ENCODE measurements at regions of chr9 and their contacts with region 1.

Region 1: GRCh38 chr9:87973730-87974292 is 522 bp downstream of the CDK20 start:
- DNase-seq: peak; percentile 19
- ATAC-seq: no peak
- H3K4me3 Mint-ChIP-seq: peak overlapping the region; percentile 82
- H3K27ac Mint-ChIP-seq: peak overlapping the region; percentile 58
- H3K4me1 Mint-ChIP-seq: peaks cover 22% of the 10 kb centered on the region
- H3K27me3 Mint-ChIP-seq: no peaks in the 10 kb centered on the region

Region 2: GRCh38 chr9:88076286-88077090 is 102.7 kb after region 1 on chr9:
- CTCF ChIA-PET with region 1: no interaction called
- POLR2A ChIA-PET with region 1: no interaction called
- intact Hi-C with region 1: loop called in 1 of 2 experiments (anchors 1 kb)
- DNase-seq: peak; percentile 68
- ATAC-seq: peak; percentile 72
- H3K4me3 Mint-ChIP-seq: peak overlapping the region; percentile 66
- H3K27ac Mint-ChIP-seq: no peak overlapping the region
- H3K4me1 Mint-ChIP-seq: peaks cover 6% of the 10 kb centered on the region
- H3K27me3 Mint-ChIP-seq: peaks cover 49% of the 10 kb centered on the region

Region 3: DNA sequence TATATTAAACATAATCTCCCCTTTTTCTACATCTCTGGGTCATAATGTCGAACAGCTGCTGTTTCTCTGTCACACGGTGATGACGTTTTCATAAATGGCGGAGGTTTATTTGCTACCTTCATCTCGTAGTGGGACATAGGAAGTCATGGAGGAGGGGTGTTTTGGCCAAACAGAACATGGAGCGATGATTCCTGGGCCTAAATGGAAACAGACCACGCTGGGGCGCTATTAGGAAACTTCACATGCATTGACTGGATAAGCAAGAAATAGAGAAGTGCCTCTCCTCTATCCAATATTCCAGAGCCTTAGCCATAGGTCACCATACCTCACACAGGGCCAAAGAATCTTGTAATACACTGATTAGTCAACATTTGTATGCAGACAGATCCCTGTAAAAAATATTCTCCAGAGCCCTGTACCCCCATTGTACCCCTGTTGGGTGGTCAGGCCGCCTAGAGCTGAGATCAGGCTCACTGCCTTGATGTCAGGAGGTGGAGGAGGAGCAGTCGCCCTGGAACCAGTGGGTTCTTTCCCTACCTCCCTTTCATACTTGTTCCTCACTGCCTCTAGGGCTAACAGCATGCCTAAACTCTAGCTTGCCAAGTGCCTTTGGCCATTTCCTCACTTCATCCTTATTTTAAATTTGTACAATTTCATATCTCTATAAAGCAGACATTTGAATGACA is 336.6 kb after region 1 on chr9:
- CTCF ChIA-PET with region 1: no interaction called
- POLR2A ChIA-PET with region 1: no interaction called
- intact Hi-C with region 1: loop called in 1 of 2 experiments (anchors 5 kb)
- DNase-seq: no peak
- ATAC-seq: no peak
- H3K4me3 Mint-ChIP-seq: no peak overlapping the region
- H3K27ac Mint-ChIP-seq: peak overlapping the region; percentile 25
- H3K4me1 Mint-ChIP-seq: peaks cover 31% of the 10 kb centered on the region
- H3K27me3 Mint-ChIP-seq: peaks cover 6% of the 10 kb centered on the region

Region 4: DNA sequence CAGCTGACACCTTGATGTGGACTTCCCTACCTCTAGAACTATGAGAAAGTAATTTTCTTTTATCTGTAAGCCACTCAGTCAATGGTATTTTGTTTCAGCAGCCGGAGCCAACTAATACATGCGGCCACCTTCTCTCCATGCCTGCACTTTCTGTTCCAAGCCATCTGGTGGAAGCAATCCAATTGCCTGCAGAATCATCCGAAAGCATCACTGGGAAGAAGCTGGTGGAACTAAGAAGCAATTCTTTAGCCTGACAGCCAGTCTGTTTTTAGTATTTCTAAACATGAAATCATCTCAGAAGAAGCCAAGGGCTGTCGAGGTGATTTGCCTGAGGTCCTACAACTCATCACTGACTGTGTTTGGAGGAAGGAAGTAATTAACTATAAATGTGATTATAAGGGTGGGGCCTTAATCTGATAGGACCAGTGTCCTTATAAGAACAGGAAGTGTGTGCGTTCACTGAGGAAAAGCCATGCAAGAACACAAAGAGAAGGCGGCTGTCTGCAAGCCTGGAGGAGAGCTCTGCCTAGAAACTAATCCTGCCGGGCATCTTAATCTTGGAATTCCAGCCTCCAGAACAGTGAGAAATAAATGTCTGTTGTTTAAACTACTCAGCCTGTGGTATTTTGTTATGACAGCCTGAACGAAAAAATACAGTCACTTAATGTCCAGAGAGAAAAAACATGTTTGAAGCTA is 610.2 kb after region 1 on chr9:
- CTCF ChIA-PET with region 1: no interaction called
- POLR2A ChIA-PET with region 1: no interaction called
- intact Hi-C with region 1: no loop called
- DNase-seq: no peak
- ATAC-seq: no peak
- H3K4me3 Mint-ChIP-seq: no peak overlapping the region
- H3K27ac Mint-ChIP-seq: no peak overlapping the region
- H3K4me1 Mint-ChIP-seq: peaks cover 9% of the 10 kb centered on the region
- H3K27me3 Mint-ChIP-seq: no peaks in the 10 kb centered on the region